ENCODE measurements at regions of chr14 and their contacts with region 1.

Region 1: DNA sequence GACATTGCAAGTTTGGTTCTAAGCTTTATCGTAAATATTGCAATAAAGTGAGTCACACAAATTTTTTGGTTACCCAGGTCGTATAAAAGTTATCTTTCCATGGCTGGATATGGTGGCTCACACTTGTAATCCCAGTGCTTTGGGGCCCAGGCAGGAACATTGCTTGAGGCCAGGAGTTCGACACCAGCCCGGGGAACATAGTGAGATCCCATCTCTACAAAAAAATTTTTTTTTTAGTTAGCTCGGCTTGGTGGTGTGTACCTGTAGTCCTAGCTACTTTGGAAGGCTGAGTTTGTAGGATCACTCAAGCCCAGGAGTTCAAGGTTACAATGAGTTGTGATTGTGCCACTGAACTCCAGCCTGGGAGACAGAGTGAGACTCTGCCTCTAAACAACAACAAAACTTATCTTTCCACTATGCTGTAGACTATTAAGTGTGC is 24.4 kb downstream of the PRORP start:
- DNase-seq: no peak
- H3K4me3 Mint-ChIP-seq: no peak overlapping the region
- H3K27ac Mint-ChIP-seq: no peak overlapping the region
- H3K4me1 Mint-ChIP-seq: peaks cover 5% of the 10 kb centered on the region
- H3K27me3 Mint-ChIP-seq: no peaks in the 10 kb centered on the region

Region 2: GRCh38 chr14:35134328-35135123 is 12.2 kb before region 1 on chr14:
- CTCF ChIA-PET with region 1: interaction called, 6 read pairs
- intact Hi-C with region 1: loop called (anchors 1 kb)
- DNase-seq: no peak
- H3K4me3 Mint-ChIP-seq: no peak overlapping the region
- H3K27ac Mint-ChIP-seq: no peak overlapping the region
- H3K4me1 Mint-ChIP-seq: peaks cover 14% of the 10 kb centered on the region
- H3K27me3 Mint-ChIP-seq: no peaks in the 10 kb centered on the region

Region 3: GRCh38 chr14:35167496-35167895 is 20.8 kb after region 1 on chr14:
- CTCF ChIA-PET with region 1: no interaction called
- intact Hi-C with region 1: no loop called
- DNase-seq: no peak
- H3K4me3 Mint-ChIP-seq: no peak overlapping the region
- H3K27ac Mint-ChIP-seq: no peak overlapping the region
- H3K4me1 Mint-ChIP-seq: peaks cover 2% of the 10 kb centered on the region
- H3K27me3 Mint-ChIP-seq: no peaks in the 10 kb centered on the region

Measured in activated naive CD4-positive, alpha-beta T cell treated with anti-CD3 and anti-CD28 coated beads for 36 hours (primary cell).